Right cardiac atrium (tissue), 5 donors: ENCODE measurements at regions of chr12 and their contacts with region 1.

Region 1: DNA sequence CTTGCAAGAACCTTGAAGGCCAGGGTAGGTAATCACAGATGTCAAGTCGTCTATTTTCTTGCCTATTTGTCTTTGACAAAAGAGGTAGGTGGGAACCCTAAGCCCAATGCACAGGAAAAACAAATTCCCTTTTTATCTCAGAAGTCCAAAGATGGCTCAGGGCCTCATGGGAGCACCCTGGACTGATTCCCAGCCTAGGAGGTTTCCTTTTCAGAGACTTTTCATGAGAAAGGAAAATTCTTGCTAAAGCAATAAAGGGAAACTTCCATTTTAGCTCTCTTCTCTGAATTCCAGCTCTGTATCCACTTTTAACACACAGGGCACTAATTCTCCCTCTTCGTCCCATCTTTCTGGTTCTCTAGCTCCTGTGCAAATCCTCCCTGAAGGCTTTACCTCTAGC is 1.2 kb downstream of the ZNF641 start:
- DNase-seq: peak; percentile 63 to 83 (median 82)
- ATAC-seq: peak; percentile 11 to 61
- H3K4me3 ChIP-seq: peak overlapping the region; percentile 56
- H3K27ac ChIP-seq: peak overlapping the region; percentile 93
- H3K4me1 ChIP-seq: peaks cover 2% of the 10 kb centered on the region
- H3K27me3 ChIP-seq: no peaks in the 10 kb centered on the region

Region 2: GRCh38 chr12:48157018-48157888 is 192.2 kb before region 1 on chr12 and contains the start of gene ASB8:
- intact Hi-C with region 1: no loop called
- DNase-seq: peak; percentile 99 to 100 (median 100)
- ATAC-seq: peak; percentile 98 to 99
- H3K4me3 ChIP-seq: peak within 1 kb of the TSS; percentile 61
- H3K27ac ChIP-seq: peak within 1 kb of the TSS; percentile 92
- H3K4me1 ChIP-seq: peaks cover 2% of the 10 kb centered on the region
- H3K27me3 ChIP-seq: no peaks in the 10 kb centered on the region
- total RNA-seq, gene ASB8: 58.5 to 69.9 (median 62.4) TPM

Region 3: GRCh38 chr12:48197971-48198671 is 151.3 kb before region 1 on chr12:
- intact Hi-C with region 1: loop called in 1 of 4 experiments (anchors 10 kb)
- DNase-seq: peak; percentile 98 to 99 (median 99)
- ATAC-seq: peak; percentile 99
- H3K4me3 ChIP-seq: peak overlapping the region; percentile 97
- H3K27ac ChIP-seq: peak overlapping the region; percentile 100
- H3K4me1 ChIP-seq: peaks cover 4% of the 10 kb centered on the region
- H3K27me3 ChIP-seq: no peaks in the 10 kb centered on the region

Region 4: DNA sequence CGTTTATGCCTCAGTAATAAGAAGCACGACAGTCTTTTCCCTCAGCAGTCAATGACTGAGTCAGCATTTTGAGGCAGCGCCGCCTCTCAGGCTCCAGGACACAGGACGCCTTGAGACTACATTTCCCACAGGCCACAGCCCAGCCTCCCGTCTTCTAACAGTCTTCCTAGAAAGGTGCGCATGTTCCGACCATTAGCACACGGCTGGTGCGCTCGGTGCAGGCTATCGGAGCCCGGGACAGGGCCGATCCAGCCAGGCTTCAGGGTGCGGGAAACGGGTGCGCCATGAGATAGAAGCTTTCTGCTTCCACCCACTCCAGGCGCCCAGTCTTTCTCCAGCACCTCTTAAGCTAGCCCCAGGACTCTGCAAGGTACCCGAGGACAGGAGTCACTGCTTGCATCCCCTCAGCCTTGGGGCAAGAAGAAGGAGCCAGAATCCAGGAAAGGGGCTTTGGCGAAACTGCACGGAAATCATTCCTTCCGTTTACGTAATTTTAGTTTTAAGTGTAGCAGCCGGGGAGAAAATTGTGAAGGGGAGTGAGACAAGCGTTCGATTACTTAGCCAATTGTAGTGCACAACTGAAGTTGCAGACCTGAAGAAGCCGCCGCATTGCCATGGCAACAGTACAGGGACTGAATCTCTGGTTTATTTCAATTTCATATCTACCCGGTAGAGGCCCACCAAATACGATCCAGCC is 52.7 kb before region 1 on chr12:
- intact Hi-C with region 1: no loop called
- DNase-seq: peak; percentile 78 to 93 (median 87)
- ATAC-seq: peak; percentile 99 to 100
- H3K4me3 ChIP-seq: peak overlapping the region; percentile 79
- H3K27ac ChIP-seq: peak overlapping the region; percentile 25
- H3K4me1 ChIP-seq: no peaks in the 10 kb centered on the region
- H3K27me3 ChIP-seq: no peaks in the 10 kb centered on the region